Activated CD4-positive, alpha-beta T cell treated with anti-CD3 and anti-CD28 coated beads, Interleukin-2, amount 10 ng/mL, durations not matched to agents 7 days and 5 days (primary cell): ENCODE measurements at regions of chr19 and their contacts with region 1.

Region 1: GRCh38 chr19:14347999-14348889 is 33.0 kb upstream of the ADGRE5 start:
- DNase-seq: peak; percentile 64
- H3K4me3 Mint-ChIP-seq: peak overlapping the region; percentile 22
- H3K27ac Mint-ChIP-seq: peak overlapping the region; percentile 88
- H3K4me1 Mint-ChIP-seq: peaks cover 27% of the 10 kb centered on the region
- H3K27me3 Mint-ChIP-seq: no peaks in the 10 kb centered on the region

Region 2: GRCh38 chr19:14198384-14199376 is 149.6 kb before region 1 on chr19:
- CTCF ChIA-PET with region 1: interaction called, 27 read pairs
- POLR2A ChIA-PET with region 1: no interaction called
- DNase-seq: no peak
- H3K4me3 Mint-ChIP-seq: no peak overlapping the region
- H3K27ac Mint-ChIP-seq: no peak overlapping the region
- H3K4me1 Mint-ChIP-seq: peaks cover 21% of the 10 kb centered on the region
- H3K27me3 Mint-ChIP-seq: peaks cover 4% of the 10 kb centered on the region

Region 3: DNA sequence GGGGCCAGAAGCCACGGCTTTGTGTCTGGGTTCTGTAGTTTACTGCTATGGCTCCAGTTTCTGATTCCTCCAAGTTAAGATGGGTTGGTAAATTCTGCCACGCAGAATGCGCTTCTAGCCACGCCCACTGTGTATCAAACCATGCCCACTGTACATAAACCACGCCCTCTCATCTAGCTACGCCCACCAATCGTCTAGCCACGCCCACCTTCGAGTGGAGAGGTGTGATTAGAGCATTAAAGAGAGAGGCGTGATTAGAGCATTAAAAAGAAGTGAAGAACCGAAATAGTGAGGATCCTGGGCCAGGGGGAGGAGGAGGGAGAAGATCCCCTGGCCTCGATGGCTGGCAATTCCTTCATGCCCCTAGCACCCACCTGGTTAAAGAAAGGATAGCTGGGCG is 10.7 kb before region 1 on chr19:
- CTCF ChIA-PET with region 1: interaction called, 28 read pairs
- POLR2A ChIA-PET with region 1: no interaction called
- DNase-seq: peak; percentile 40
- H3K4me3 Mint-ChIP-seq: no peak overlapping the region
- H3K27ac Mint-ChIP-seq: no peak overlapping the region
- H3K4me1 Mint-ChIP-seq: peaks cover 15% of the 10 kb centered on the region
- H3K27me3 Mint-ChIP-seq: no peaks in the 10 kb centered on the region

Region 4: DNA sequence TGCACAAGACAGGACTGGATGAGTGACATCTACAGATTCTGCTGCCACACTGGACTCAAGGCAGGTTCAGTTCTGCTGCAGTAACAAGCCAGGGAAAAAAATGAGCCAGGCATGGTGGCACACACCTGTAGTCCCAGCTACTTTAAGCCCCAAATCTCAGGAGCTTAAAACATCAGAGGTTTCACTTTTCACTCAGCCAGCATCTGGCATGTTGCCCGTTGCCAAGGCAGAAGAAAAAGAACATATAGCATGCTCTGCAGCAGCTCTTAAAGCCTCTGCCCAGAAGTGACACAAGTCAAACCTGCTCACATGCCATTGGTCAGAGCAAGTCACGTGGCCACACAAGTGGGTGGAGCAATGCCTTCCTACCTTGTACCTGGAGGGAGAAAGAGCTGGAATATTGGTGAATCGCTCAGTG is 18.3 kb after region 1 on chr19:
- CTCF ChIA-PET with region 1: interaction called, 17 read pairs
- POLR2A ChIA-PET with region 1: no interaction called
- DNase-seq: peak; percentile 96
- H3K4me3 Mint-ChIP-seq: peak overlapping the region; percentile 50
- H3K27ac Mint-ChIP-seq: peak overlapping the region; percentile 99
- H3K4me1 Mint-ChIP-seq: peaks cover 76% of the 10 kb centered on the region
- H3K27me3 Mint-ChIP-seq: no peaks in the 10 kb centered on the region

Region 5: GRCh38 chr19:14383661-14384555 is 35.7 kb after region 1 on chr19:
- CTCF ChIA-PET with region 1: interaction called, 11 read pairs
- POLR2A ChIA-PET with region 1: no interaction called
- DNase-seq: peak; percentile 57
- H3K4me3 Mint-ChIP-seq: peak overlapping the region; percentile 99
- H3K27ac Mint-ChIP-seq: peak overlapping the region; percentile 98
- H3K4me1 Mint-ChIP-seq: peaks cover 44% of the 10 kb centered on the region
- H3K27me3 Mint-ChIP-seq: no peaks in the 10 kb centered on the region

Region 6: DNA sequence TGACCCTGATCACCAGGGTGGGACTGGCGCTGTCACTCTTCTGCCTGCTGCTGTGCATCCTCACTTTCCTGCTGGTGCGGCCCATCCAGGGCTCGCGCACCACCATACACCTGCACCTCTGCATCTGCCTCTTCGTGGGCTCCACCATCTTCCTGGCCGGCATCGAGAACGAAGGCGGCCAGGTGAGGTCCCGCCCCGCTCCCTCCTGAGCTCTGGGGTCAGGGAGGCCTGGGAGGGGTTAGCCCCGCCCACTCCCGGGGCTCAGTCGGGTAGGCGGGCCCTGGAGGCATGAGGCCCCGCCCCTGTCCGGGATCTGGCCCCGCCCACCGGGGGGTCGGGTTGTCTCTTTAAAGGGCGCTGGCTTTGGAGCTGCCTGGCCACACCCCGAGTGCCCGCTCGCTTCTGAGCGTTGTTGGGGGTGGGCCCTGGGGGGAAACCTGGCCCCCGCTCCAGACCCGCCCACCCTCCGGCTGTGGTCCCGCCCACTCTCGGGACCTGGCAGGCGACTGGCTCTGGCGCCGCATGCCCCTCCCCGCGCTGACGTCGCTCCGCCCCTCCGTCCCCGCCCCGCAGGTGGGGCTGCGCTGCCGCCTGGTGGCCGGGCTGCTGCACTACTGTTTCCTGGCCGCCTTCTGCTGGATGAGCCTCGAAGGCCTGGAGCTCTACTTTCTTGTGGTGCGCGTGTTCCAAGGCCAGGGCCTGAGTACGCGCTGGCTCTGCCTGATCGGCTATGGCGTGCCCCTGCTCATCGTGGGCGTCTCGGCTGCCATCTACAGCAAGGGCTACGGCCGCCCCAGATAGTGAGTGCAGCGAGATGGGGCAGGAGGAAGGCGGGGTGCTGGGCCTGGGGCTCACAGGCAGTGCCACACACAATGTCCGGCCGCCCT is 57.8 kb after region 1 on chr19:
- CTCF ChIA-PET with region 1: interaction called, 13 read pairs
- POLR2A ChIA-PET with region 1: no interaction called
- DNase-seq: peak; percentile 88
- H3K4me3 Mint-ChIP-seq: no peak overlapping the region
- H3K27ac Mint-ChIP-seq: peak overlapping the region; percentile 75
- H3K4me1 Mint-ChIP-seq: peaks cover 31% of the 10 kb centered on the region
- H3K27me3 Mint-ChIP-seq: no peaks in the 10 kb centered on the region